ENCODE measurements at regions of chr16 and their contacts with region 1.

Region 1: GRCh38 chr16:589658-590159 is at the start of gene RAB40C:
- DNase-seq: peak; percentile 99 to 100
- ATAC-seq: peak; percentile 81 to 88 (median 82)
- H3K4me3 ChIP-seq: peak within 1 kb of the TSS; percentile 96
- H3K27ac ChIP-seq: peak within 1 kb of the TSS; percentile 97
- H3K4me1 ChIP-seq: peaks cover 63% of the 10 kb centered on the region
- H3K27me3 ChIP-seq: no peaks in the 10 kb centered on the region
- CTCF ChIP-seq: no peak
- total RNA-seq, gene RAB40C: 12.3 to 20.2 (median 14.4) TPM

Region 2: DNA sequence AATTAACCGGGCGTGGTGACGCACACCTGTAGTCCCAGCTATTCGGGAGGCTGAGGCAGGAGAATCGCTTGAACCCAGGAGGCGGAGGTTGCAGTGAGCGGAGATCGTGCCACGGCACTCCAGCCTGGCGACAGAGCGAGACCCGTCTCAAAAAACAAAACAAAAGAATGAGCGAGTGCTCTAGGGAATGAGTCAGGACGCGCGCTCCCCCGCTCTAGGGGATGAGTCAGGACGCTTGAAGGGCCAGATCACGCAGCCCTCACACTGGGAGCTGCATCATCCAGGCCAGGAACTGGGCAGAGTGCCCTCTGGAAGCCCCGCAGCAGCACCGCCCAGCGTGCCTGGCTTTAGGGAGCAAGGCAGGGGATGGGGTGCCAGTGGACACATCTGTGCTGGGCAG is 37.1 kb after region 1 on chr16:
- intact Hi-C with region 1: loop called (anchors 5 kb)
- DNase-seq: peak; percentile 74 to 80
- ATAC-seq: peak; percentile 68 to 87 (median 76)
- H3K4me3 ChIP-seq: no peak overlapping the region
- H3K27ac ChIP-seq: peak overlapping the region; percentile 68
- H3K4me1 ChIP-seq: peaks cover 25% of the 10 kb centered on the region
- H3K27me3 ChIP-seq: no peaks in the 10 kb centered on the region
- CTCF ChIP-seq: no peak

Region 3: DNA sequence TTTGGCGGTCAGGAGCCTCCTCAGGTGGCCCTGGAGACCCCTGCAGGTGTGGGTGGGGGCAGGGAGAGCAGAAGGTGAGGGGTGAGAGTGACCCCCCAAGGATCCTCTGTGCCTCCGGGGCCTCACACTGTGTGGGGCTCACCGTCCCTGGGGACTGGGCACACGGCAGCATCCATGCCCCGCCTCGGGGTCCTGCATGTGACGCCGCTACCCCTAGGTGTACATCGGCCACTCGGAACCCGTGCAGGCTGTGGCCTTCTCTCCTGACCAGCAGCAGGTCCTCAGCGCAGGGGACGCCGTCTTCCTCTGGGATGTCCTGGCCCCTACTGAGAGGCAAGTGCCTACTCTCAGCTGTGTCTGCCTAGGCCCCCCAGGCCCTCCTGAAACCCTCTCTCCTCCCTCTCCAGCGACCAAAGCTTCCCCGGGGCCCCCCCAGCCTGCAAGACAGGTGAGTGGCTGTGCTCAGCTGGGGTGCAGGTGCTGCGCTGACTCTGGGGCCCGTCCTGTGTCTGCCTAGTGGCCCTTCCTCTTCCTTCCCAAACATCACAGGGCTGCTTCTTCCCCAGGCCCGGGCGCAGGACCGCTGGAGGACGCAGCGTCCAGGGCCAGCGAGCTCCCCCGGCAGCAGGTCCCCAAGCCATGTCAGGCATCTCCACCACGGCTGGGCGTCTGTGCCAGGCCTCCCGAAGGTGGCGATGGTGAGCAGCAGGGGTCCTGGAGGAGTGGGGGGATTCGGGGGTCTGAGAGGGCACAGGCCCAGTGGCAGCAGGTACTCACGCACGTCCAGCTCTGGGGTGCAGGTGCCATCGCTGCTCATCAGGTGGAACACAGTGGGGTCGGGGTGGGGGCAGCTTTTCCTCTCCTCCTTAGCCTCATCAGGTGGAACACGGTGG is 69.2 kb after region 1 on chr16:
- intact Hi-C with region 1: no loop called
- DNase-seq: no peak
- ATAC-seq: no peak
- H3K4me3 ChIP-seq: no peak overlapping the region
- H3K27ac ChIP-seq: no peak overlapping the region
- H3K4me1 ChIP-seq: peaks cover 11% of the 10 kb centered on the region
- H3K27me3 ChIP-seq: no peaks in the 10 kb centered on the region
- CTCF ChIP-seq: no peak